CD8-positive, alpha-beta T cell (primary cell): ENCODE measurements at regions of chr6 and their contacts with region 1.

Region 1: GRCh38 chr6:157184202-157185020 is 138.9 kb downstream of the TMEM242 start:
- DNase-seq: peak; percentile 17 to 71 (median 64)
- ATAC-seq: peak; percentile 89
- H3K4me3 ChIP-seq: no peak overlapping the region
- H3K4me3 Mint-ChIP-seq: no peak overlapping the region
- H3K27ac ChIP-seq: no peak overlapping the region
- H3K27ac Mint-ChIP-seq: peak overlapping the region; percentile 10
- H3K4me1 ChIP-seq: no peaks in the 10 kb centered on the region
- H3K4me1 Mint-ChIP-seq: peaks cover 17% of the 10 kb centered on the region
- H3K27me3 ChIP-seq: no peaks in the 10 kb centered on the region
- H3K27me3 Mint-ChIP-seq: no peaks in the 10 kb centered on the region
- CTCF ChIP-seq: peak; percentile 69

Region 2: DNA sequence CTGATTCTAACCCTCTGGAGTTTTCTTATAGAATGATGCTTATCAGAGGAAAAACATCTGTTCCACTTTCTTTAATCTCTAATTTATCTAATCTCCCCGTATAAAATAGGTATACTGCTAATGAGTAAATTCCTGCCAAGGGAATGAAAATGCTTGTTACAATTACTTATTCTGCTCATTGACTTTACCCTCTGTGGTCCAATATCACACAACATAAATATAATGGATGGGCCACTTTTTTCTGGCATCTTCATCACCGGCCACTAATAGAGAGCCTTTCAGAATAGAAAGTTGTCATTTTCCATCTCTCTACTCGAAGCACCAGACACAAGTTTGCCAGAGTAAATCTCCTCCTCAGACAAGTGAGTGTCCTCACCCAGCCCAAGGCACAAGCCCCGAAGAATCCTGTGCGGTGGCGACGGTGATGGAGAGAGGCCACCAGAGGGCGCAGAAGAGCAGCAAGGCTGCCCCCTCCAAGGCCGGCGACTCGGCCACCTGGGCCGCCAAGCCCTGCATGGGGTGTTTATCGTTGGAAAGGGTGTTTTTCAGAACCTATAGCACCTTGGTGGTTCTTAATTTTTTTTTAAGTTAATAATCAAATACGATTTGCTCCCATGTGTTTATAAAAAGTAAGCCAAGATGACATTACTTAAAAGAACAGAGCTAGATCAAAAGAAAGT is 620.1 kb before region 1 on chr6:
- CTCF ChIA-PET with region 1: no interaction called
- POLR2A ChIA-PET with region 1: no interaction called
- intact Hi-C with region 1: loop called (anchors 1 to 2 kb)
- DNase-seq: peak; percentile 59 to 88 (median 73)
- ATAC-seq: peak; percentile 93
- H3K4me3 ChIP-seq: no peak overlapping the region
- H3K4me3 Mint-ChIP-seq: no peak overlapping the region
- H3K27ac ChIP-seq: no peak overlapping the region
- H3K27ac Mint-ChIP-seq: no peak overlapping the region
- H3K4me1 ChIP-seq: no peaks in the 10 kb centered on the region
- H3K4me1 Mint-ChIP-seq: no peaks in the 10 kb centered on the region
- H3K27me3 ChIP-seq: peaks cover 0 to 3% of the 10 kb centered on the region in 2 experiments
- H3K27me3 Mint-ChIP-seq: peaks cover 6% of the 10 kb centered on the region
- CTCF ChIP-seq: peak; percentile 89

Region 3: DNA sequence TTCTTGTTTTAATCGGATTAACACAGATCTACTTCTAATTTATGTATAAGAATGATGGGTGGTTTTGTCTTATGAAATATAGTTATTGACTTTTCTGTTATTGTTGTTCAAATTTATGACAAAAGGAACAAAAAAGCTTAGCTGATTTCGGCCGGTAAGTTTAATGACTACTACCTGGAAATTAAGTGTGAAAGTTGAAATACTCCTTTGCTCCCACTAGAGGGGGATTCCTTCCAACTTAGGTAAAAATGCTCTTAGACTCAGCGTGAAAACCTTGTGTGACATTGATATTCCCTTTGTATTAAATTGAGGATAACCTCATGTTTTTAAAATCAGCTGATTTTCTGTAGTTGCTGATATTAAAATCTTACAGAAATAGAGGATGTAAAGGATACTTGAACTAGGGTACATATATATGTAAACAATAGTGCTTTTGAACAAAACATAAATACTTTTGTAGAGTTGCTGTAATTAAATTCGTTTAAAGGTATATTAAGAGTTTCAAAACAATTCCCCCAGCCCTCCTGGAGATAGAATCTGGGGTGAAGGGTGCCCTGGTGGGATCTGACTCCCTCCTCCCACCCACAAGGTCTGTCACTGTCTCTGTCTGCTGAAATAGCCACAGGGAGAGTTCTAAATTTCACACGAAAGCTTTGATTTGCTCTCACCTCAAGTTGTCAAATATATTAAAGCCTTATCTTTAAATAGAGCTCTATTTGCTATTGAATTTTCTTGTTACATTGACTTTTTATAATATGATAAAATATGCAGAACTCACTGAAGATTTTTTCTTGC is 149.8 kb before region 1 on chr6:
- CTCF ChIA-PET with region 1: interaction called, 16 read pairs
- POLR2A ChIA-PET with region 1: interaction called, 3 read pairs
- intact Hi-C with region 1: loop called (anchors 1 kb)
- DNase-seq: peak in 2 of 9 experiments; percentile 61 to 74
- ATAC-seq: peak; percentile 83
- H3K4me3 ChIP-seq: no peak overlapping the region
- H3K4me3 Mint-ChIP-seq: peak overlapping the region; percentile 97
- H3K27ac ChIP-seq: no peak overlapping the region
- H3K27ac Mint-ChIP-seq: peak overlapping the region; percentile 53
- H3K4me1 ChIP-seq: peaks cover 24% of the 10 kb centered on the region
- H3K4me1 Mint-ChIP-seq: peaks cover 33% of the 10 kb centered on the region
- H3K27me3 ChIP-seq: no peaks in the 10 kb centered on the region
- H3K27me3 Mint-ChIP-seq: no peaks in the 10 kb centered on the region
- CTCF ChIP-seq: peak; percentile 77

Region 4: GRCh38 chr6:157194643-157195042 is 10.2 kb after region 1 on chr6:
- CTCF ChIA-PET with region 1: interaction called, 11 read pairs
- POLR2A ChIA-PET with region 1: interaction called, 3 read pairs
- intact Hi-C with region 1: no loop called
- DNase-seq: no peak
- ATAC-seq: no peak
- H3K4me3 ChIP-seq: no peak overlapping the region
- H3K4me3 Mint-ChIP-seq: no peak overlapping the region
- H3K27ac ChIP-seq: no peak overlapping the region
- H3K27ac Mint-ChIP-seq: peak overlapping the region; percentile 60
- H3K4me1 ChIP-seq: no peaks in the 10 kb centered on the region
- H3K4me1 Mint-ChIP-seq: peaks cover 17% of the 10 kb centered on the region
- H3K27me3 ChIP-seq: no peaks in the 10 kb centered on the region
- H3K27me3 Mint-ChIP-seq: no peaks in the 10 kb centered on the region
- CTCF ChIP-seq: no peak

Region 5: DNA sequence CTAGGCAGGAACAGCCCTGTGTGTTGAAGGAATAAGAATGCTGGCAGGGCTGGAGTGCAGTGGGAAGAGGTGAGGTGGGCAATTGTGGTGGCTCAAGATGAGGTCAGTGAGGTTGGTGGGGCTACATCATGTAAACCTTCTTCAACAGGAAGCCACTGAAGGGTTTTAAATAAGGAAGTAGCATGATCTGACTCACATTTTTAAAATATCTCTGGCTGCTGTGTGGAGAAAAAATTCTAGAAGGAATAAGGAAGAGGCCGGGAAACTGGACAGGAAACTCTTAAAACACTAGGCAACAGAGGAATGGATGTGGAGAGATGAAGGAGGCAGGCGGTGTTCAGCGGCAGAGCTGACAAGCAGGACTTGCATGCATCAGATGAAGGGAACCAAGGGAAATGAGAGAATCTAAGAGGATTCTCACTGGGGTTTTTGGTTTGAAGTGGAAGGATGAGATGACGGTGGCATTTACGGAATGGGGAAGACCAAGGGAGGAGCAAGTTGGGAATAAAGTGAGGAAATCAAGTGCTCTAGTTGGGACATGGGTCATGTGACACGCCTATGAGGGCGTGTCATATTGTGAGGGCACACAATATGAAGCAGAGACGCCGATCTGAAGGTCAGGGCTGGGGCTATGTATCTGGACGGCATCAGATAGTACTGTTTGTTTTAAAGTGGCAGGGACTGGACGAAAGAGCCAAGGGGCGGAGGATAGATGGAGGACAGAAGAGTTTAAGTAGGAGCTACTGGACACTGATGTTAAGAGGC is 120.7 kb after region 1 on chr6:
- CTCF ChIA-PET with region 1: no interaction called
- POLR2A ChIA-PET with region 1: no interaction called
- intact Hi-C with region 1: no loop called
- DNase-seq: no peak
- ATAC-seq: no peak
- H3K4me3 ChIP-seq: no peak overlapping the region
- H3K4me3 Mint-ChIP-seq: no peak overlapping the region
- H3K27ac ChIP-seq: no peak overlapping the region
- H3K27ac Mint-ChIP-seq: no peak overlapping the region
- H3K4me1 ChIP-seq: no peaks in the 10 kb centered on the region
- H3K4me1 Mint-ChIP-seq: peaks cover 4% of the 10 kb centered on the region
- H3K27me3 ChIP-seq: no peaks in the 10 kb centered on the region
- H3K27me3 Mint-ChIP-seq: no peaks in the 10 kb centered on the region
- CTCF ChIP-seq: no peak

Region 6: DNA sequence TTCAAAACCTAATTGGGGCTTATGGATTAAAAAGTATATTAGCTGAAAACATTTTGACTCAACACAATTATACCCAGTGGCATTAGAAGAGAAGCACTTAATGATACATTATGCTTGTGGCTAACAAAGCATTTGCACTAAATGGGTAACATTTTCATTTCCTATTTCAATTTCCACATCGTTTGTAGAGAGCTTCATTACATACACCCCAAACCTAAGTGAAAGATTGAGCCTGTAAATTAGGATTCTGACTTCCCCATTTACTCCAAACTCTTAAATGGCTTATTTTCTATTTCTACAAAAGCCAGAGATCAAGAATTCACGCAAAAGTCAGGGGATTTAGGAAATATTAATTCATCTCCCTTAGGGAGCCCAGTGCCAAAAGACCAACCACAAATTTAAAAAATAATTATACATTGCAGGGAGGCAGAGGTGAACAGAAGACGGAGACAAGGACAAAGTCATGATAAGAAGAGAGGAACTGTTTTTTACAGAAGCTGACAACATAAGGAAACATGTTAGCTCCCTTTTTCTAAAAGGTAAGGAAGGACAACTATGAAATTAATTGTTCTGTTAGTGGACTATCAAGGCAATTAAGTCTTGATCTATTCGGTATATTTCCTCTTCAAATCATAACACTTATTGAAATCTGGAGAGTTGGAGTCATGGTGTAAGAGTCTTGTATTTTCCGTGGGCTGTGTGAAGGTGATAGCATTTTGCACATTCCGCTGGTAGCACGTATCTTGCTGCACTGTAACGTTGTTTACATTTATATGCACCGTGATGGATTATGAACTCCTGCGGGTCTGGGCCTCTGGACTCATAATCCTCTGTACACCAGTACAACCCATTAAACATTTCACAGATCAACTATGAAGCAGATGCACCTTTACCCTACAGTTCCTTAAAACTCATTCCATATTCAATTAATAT is 1659.6 kb after region 1 on chr6:
- CTCF ChIA-PET with region 1: no interaction called
- POLR2A ChIA-PET with region 1: no interaction called
- intact Hi-C with region 1: no loop called
- DNase-seq: no peak
- ATAC-seq: no peak
- H3K4me3 ChIP-seq: no peak overlapping the region
- H3K4me3 Mint-ChIP-seq: no peak overlapping the region
- H3K27ac ChIP-seq: no peak overlapping the region
- H3K27ac Mint-ChIP-seq: no peak overlapping the region
- H3K4me1 ChIP-seq: no peaks in the 10 kb centered on the region
- H3K4me1 Mint-ChIP-seq: peaks cover 2% of the 10 kb centered on the region
- H3K27me3 ChIP-seq: no peaks in the 10 kb centered on the region
- H3K27me3 Mint-ChIP-seq: no peaks in the 10 kb centered on the region
- CTCF ChIP-seq: no peak